Posterior vena cava (tissue), 2 donors: ENCODE measurements at regions of chr3 and their contacts with region 1.

Region 1: GRCh38 chr3:29291262-29291981 is 10.6 kb downstream of the RBMS3 start:
- DNase-seq: no peak

Region 2: DNA sequence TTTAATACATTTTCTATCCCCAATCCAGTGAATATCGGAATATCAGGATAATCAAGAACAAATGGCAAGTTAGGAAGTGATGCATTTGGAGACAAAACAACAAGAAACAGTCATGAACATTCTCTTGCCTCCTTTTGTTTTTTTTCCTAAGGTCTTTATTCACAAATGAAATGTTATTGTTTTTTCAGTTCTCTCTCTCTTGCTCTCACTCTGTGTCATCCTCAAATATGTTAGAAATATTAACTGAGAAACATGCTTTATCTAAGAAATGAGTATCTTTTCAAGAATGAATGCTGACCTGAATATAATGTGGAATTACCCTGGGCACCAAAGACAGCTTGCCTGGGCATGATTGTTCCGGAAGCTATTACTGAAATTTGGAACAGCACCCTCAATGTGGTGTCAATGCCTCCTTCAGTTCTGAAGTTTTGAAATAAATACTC is 40.8 kb after region 1 on chr3:
- intact Hi-C with region 1: loop called in 1 of 2 experiments (anchors 5 kb)
- DNase-seq: no peak

Region 3: GRCh38 chr3:29346828-29347227 is 55.4 kb after region 1 on chr3:
- intact Hi-C with region 1: loop called in 1 of 2 experiments (anchors 10 kb)
- DNase-seq: no peak

Region 4: DNA sequence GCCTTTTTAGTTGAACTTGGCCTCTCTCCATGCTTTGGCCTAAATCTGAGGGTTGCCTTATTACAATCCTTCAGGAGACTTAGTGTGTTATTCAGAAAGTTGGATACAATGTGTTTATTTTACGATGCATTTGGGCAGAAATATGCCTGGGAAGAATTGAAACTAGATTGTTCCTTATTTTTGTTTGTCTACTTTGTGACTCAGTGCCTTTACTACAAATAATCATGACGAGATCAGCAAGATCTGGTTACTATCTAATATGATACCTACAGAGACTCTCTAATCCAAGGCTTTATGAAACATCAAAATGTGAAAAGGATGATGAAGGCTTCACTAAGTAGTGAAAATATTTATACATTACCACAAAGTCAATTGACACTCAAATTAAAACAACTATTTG is 71.7 kb after region 1 on chr3:
- intact Hi-C with region 1: no loop called
- DNase-seq: no peak

Region 5: DNA sequence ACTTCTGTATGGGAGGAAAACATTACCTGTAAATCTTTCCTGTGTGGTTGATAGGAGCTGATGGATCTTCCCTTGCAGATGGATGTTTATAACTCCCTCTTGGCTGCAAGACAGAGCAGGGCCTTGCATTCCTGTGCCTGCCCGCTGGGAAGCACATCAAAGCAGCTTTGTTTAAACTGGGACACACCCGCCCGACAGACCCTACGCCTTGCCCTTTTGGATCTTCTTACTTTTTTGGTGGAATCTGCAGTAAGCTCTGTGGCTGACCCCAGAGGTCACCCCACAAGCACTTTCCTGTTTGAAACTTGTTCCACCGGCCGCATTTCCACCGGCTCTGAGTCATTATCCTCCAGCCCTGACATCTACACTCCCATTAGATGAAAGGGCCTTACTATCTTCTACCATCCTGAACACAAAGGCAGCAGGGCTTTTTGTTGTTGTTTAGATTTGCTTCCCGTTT is 1997.2 kb after region 1 on chr3:
- intact Hi-C with region 1: no loop called
- DNase-seq: no peak